ENCODE measurements at regions of chr12 and their contacts with region 1.

Region 1: GRCh38 chr12:56448860-56449621 is at the start of gene TIMELESS:
- H3K4me3 Mint-ChIP-seq: peak within 1 kb of the TSS; percentile 92
- H3K27ac Mint-ChIP-seq: peak within 1 kb of the TSS; percentile 89
- H3K4me1 Mint-ChIP-seq: peaks cover 29% of the 10 kb centered on the region
- H3K27me3 Mint-ChIP-seq: no peaks in the 10 kb centered on the region

Region 2: GRCh38 chr12:56243731-56244181 is 205.3 kb before region 1 on chr12:
- intact Hi-C with region 1: no loop called
- H3K4me3 Mint-ChIP-seq: no peak overlapping the region
- H3K27ac Mint-ChIP-seq: no peak overlapping the region
- H3K4me1 Mint-ChIP-seq: no peaks in the 10 kb centered on the region
- H3K27me3 Mint-ChIP-seq: no peaks in the 10 kb centered on the region

Region 3: DNA sequence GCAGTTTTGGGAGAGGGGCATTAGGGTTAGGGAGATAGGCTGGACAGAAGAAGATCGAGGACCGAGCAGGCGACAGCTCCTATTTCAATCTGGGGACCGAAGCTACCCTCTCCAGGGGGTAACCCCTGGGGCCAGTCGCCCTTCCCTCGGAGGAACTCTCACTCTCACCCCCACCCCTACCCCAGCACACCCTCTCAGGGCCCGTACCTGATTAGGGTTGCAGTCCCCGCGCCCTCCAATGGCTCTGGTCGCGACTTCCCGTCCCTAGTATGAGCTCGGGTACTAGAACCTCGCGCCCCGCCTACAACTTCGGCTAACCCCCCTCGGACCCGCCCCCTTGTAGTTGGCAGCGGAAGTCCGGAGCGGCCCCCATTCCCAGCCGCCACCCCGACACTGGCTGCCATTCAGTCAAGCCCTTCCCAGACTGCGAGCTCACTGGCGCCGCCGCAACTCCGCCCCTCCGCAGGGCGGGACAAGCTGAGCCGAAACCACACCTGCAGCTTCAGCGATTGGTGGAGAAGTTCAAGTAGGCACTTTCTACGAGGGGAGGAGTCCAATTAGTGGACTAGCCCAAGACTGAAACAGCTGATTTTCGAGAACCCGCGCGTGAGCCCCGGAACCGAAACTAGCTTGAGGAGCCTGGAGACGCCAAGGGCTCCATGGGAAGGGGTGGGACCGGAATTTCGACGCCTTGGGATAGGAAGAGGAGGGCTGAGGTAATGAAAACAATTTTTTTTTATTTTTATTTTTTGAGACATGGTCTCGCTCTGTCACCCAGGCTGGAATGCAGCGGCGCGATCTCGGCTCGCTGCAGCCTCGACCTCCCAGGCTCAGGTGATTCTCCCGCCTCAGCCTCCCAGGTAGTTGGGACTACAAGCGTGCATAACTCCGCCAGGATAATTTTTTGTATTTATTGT is 88.9 kb before region 1 on chr12 and contains the start of gene STAT2:
- intact Hi-C with region 1: loop called (anchors 5 kb)
- H3K4me3 Mint-ChIP-seq: peak within 1 kb of the TSS; percentile 86
- H3K27ac Mint-ChIP-seq: peak within 1 kb of the TSS; percentile 91
- H3K4me1 Mint-ChIP-seq: peaks cover 15% of the 10 kb centered on the region
- H3K27me3 Mint-ChIP-seq: no peaks in the 10 kb centered on the region

Region 4: DNA sequence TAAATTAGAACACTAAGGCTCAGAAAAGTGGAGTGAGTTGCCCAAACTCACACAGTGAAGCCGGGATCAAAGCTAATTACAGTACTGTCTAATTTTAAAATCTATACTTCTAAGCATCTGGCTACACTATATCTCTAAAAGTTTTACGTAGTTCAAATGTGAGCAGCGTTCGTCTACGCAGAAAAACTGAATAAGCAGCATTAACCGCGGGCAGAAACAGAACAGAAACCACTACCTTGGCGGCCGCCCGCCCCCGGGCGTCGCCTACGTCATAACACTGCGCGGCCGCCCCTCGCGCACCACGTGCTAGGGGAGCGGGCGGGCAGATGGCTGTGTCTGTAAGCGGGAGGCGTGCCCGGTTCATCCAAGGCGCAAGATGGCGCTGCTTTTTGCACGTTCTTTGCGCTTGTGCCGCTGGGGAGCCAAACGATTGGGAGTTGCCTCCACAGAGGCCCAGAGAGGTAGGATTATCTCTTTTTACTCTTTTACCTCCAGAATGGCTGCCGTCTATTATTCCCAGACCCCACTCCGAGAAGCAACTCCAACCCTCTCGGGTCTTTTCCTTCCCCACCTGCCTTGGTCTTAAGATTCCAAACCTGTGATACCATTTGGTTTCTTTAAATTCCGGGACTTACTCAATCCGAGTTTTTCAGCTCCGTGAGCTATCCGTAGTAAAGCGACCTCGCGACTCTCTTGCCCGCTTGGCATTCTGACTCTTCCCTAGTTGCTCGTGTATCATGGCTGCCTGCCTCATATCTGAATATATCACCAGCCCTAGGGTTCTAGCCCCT is 19.4 kb after region 1 on chr12 and contains the start of gene SPRYD4:
- intact Hi-C with region 1: loop called (anchors 1 kb)
- H3K4me3 Mint-ChIP-seq: peak within 1 kb of the TSS; percentile 94
- H3K27ac Mint-ChIP-seq: peak within 1 kb of the TSS; percentile 98
- H3K4me1 Mint-ChIP-seq: peaks cover 33% of the 10 kb centered on the region
- H3K27me3 Mint-ChIP-seq: no peaks in the 10 kb centered on the region

Measured in dendritic cell treated with granulocyte-macrophage colony-stimulating factor and Interleukin-4, amounts not matched to agents 40 ng/mL and 50 ng/mL, for 4 days (primary cell).